ENCODE measurements at regions of chr11 and their contacts with region 1.

Region 1: GRCh38 chr11:118659314-118659952 is 20.0 kb downstream of the TREH start:
- DNase-seq: peak; percentile 88 to 100
- H3K4me3 ChIP-seq: no peak overlapping the region
- H3K27ac ChIP-seq: no peak overlapping the region
- H3K4me1 ChIP-seq: peaks cover 0 to 27% (median 22%) of the 10 kb centered on the region in 4 experiments; a peak in 6 of 7 replicates
- H3K27me3 ChIP-seq: no peaks in the 10 kb centered on the region
- CTCF ChIP-seq: peak; percentile 90 to 99 (median 99)
- EP300 ChIP-seq: peak in 1 of 2 experiments; percentile 55; a peak in 1 of 3 replicates
- POLR2A ChIP-seq: no peak
- RAD21 ChIP-seq: peak; percentile 86 to 88

Region 2: GRCh38 chr11:118448294-118448693 is 211.1 kb before region 1 on chr11:
- CTCF ChIA-PET with region 1: no interaction called
- POLR2A ChIA-PET with region 1: no interaction called
- DNase-seq: no peak
- H3K4me3 ChIP-seq: no peak overlapping the region
- H3K27ac ChIP-seq: no peak overlapping the region
- H3K4me1 ChIP-seq: no peaks in the 10 kb centered on the region
- H3K27me3 ChIP-seq: no peaks in the 10 kb centered on the region
- CTCF ChIP-seq: no peak
- EP300 ChIP-seq: no peak
- POLR2A ChIP-seq: no peak
- RAD21 ChIP-seq: no peak

Region 3: DNA sequence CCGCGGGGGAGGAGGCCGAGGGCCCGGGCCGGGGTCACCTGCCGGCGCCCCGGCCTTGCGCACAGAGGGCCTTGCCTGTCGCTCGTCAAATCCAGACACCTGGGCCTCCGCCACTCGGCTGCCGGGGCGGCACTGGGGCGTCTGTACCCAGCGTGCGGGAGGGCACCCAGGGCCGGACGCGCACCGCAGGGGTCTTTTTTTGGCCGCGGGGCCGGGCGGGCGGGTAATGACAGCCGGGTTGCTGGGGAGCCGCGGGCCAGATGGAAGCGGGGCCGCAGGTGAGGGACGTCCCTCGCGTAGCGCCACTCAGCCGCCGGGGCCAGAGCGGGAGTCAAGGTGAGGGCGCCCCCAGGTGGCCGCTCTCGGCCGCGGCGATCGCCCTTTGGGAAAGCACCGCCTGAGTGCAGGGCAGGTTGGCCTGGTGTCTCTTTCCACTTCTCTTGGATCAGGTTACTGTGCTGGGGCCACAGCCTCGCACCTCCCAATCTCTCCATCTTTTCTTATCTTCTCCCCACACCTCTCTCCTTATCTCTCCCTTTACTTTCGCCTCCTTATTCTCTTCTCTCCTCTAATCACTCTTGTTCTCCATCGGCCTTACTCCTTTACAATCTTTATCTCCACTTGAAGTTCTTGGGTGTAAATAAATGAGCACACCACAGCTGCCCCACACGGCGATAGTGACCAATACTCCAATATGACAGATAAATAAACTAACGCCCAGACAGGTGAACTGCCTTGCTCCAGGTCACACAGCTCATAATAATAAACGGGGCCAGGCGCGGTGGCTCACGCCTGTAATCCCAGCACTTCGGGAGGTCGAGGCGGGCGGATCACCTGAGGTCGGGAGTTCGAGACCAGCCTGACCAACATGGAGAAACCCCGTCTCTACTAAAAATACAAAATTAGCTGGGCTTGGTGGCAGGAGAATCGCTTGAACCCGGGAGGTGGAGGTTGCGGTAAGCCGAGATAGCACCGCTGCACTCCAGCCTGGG is 48.3 kb before region 1 on chr11:
- CTCF ChIA-PET with region 1: interaction called, 63 read pairs
- POLR2A ChIA-PET with region 1: interaction called, 11 read pairs
- DNase-seq: peak; percentile 60 to 98
- H3K4me3 ChIP-seq: peak overlapping the region; percentile 14 to 66 (median 48); a peak in 7 of 8 replicates
- H3K27ac ChIP-seq: no peak overlapping the region
- H3K4me1 ChIP-seq: peaks cover 24 to 59% (median 34%) of the 10 kb centered on the region in 4 experiments
- H3K27me3 ChIP-seq: peaks cover 42 to 55% (median 50%) of the 10 kb centered on the region in 4 experiments
- CTCF ChIP-seq: peak; percentile 91 to 96 (median 91)
- EP300 ChIP-seq: no peak
- POLR2A ChIP-seq: no peak
- RAD21 ChIP-seq: peak; percentile 67 to 79; a peak in 3 of 4 replicates

Region 4: DNA sequence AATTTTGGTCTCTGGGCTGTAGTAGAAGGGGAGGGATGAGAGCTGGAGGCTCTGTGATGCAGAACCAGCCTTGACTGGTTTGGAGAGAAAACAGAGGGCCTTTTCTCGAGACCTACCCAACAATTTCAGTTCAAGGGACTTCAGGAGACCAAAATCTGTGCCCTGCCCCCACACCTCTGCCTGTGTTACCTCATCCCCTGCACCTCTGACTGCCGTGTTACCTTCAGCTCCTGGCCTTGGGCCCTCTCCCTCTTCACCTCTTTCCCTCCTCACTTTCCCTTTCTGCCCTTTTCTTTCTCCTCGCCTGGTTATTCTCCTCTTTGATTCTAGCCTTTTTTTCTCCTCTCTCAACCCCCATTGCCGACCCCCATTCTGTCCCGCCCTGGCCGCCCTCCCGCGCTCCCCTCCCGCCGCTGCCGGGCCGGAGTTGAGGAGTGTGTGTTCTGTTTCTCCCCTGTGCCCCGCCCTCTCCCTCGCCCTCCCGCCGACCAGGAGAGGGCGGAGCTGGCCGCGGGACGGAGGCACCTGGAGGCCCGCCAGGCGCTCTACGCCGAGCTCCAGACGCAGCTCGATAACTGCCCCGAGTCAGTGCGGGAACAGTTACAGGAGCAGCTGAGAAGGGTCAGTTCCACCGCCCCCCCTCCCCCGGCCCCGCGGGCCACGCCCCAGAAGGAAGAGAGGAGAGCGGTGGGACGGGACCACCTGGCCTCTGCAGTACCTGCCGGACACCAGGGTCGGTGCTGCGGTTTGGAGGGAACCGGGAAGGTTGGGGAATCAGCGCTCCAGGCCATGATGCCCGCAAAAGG is 24.8 kb before region 1 on chr11:
- CTCF ChIA-PET with region 1: interaction called, 89 read pairs
- POLR2A ChIA-PET with region 1: interaction called, 271 read pairs
- DNase-seq: peak; percentile 80 to 89
- H3K4me3 ChIP-seq: peak overlapping the region; percentile 36 to 72 (median 62)
- H3K27ac ChIP-seq: peak overlapping the region; percentile 89
- H3K4me1 ChIP-seq: peaks cover 16 to 23% (median 19%) of the 10 kb centered on the region in 4 experiments
- H3K27me3 ChIP-seq: no peaks in the 10 kb centered on the region
- CTCF ChIP-seq: peak in 2 of 3 experiments; percentile 34 to 59; a peak in 3 of 4 replicates
- EP300 ChIP-seq: no peak
- POLR2A ChIP-seq: peak; percentile 50 to 76
- RAD21 ChIP-seq: 0 out of 4 replicates have a peak, but pooled peaks of 1 of the 2 experiments have one; percentile 8

Region 5: GRCh38 chr11:118672846-118673245 is 13.4 kb after region 1 on chr11:
- CTCF ChIA-PET with region 1: interaction called, 86 read pairs
- POLR2A ChIA-PET with region 1: interaction called, 15 read pairs
- DNase-seq: no peak
- H3K4me3 ChIP-seq: no peak overlapping the region
- H3K27ac ChIP-seq: no peak overlapping the region
- H3K4me1 ChIP-seq: no peaks in the 10 kb centered on the region
- H3K27me3 ChIP-seq: no peaks in the 10 kb centered on the region; a peak in 1 of 7 replicates
- CTCF ChIP-seq: peak in 2 of 3 experiments; percentile 26 to 52; a peak in 2 of 4 replicates
- EP300 ChIP-seq: no peak
- POLR2A ChIP-seq: no peak
- RAD21 ChIP-seq: peak; percentile 24 to 28; a peak in 3 of 4 replicates

Region 6: GRCh38 chr11:118956094-118956846 is 296.8 kb after region 1 on chr11 and contains the start of gene UPK2:
- CTCF ChIA-PET with region 1: interaction called, 11 read pairs
- POLR2A ChIA-PET with region 1: no interaction called
- DNase-seq: peak; percentile 75 to 98
- H3K4me3 ChIP-seq: no peak within 1 kb of the TSS
- H3K27ac ChIP-seq: no peak within 1 kb of the TSS
- H3K4me1 ChIP-seq: peaks cover 0 to 5% (median 1%) of the 10 kb centered on the region in 4 experiments; a peak in 3 of 7 replicates
- H3K27me3 ChIP-seq: peaks cover 0 to 4% (median 3%) of the 10 kb centered on the region in 4 experiments; a peak in 2 of 7 replicates
- CTCF ChIP-seq: peak; percentile 98 to 99 (median 99)
- EP300 ChIP-seq: no peak
- POLR2A ChIP-seq: no peak
- RAD21 ChIP-seq: peak; percentile 99
- total RNA-seq, gene UPK2: not detected in 2 replicates

Measured in H1 (cell line).